ENCODE measurements at regions of chr14 and their contacts with region 1.

Region 1: GRCh38 chr14:83300476-83301064 is 1766.9 kb upstream of the SEL1L start:
- H3K4me3 ChIP-seq: no peak overlapping the region
- H3K27ac ChIP-seq: no peak overlapping the region
- H3K4me1 ChIP-seq: no peaks in the 10 kb centered on the region
- CTCF ChIP-seq: peak; percentile 33; the same call in 1 of the 2 replicates

Region 2: DNA sequence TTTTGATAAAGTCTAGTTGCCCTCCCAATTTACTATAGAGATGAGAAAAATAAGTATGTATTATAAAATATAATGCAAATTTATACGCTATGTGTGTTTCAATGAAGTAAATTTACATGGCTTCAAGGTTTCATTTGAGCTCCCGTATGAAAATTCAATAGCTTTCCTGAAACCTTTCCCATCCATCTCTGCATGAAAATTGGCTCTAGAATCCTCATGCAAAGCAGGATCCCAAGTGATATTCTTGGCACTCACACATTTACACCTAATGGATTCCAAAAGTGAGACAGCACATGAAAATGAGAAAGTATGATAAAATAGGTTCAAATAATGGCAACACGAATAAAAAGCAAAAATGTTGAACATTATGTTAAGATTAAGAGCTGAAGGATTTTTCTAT is 171.1 kb before region 1 on chr14:
- CTCF ChIA-PET with region 1: no interaction called
- POLR2A ChIA-PET with region 1: no interaction called
- H3K4me3 ChIP-seq: no peak overlapping the region
- H3K27ac ChIP-seq: no peak overlapping the region
- H3K4me1 ChIP-seq: no peaks in the 10 kb centered on the region
- CTCF ChIP-seq: no peak

Region 3: DNA sequence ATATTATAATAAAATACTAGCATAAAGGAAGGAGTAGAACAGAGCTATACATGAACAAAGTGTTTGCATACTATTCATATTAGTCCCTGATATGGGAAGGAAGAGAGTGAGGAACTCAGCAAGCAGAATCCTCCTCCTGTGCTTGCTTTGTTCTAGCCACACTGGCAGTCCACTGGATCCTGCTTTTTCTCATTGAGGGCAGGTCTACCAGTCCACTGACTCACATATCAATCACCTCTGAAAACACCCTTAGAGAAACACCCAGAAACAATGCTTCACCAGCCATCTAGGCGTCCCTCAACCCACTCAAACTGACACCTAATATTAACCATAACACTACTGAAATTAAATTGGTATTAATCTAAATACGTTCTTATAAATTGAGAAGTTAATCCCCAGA is 94.8 kb after region 1 on chr14:
- CTCF ChIA-PET with region 1: no interaction called
- POLR2A ChIA-PET with region 1: no interaction called
- H3K4me3 ChIP-seq: no peak overlapping the region
- H3K27ac ChIP-seq: no peak overlapping the region
- H3K4me1 ChIP-seq: no peaks in the 10 kb centered on the region
- CTCF ChIP-seq: no peak

Region 4: GRCh38 chr14:83463500-83464098 is 163.0 kb after region 1 on chr14:
- CTCF ChIA-PET with region 1: interaction called, 11 read pairs
- POLR2A ChIA-PET with region 1: no interaction called
- H3K4me3 ChIP-seq: no peak overlapping the region
- H3K27ac ChIP-seq: no peak overlapping the region
- H3K4me1 ChIP-seq: no peaks in the 10 kb centered on the region
- CTCF ChIP-seq: no peak